Caco-2 (cell line): ENCODE measurements at regions of chr7 and their contacts with region 1.

Region 1: DNA sequence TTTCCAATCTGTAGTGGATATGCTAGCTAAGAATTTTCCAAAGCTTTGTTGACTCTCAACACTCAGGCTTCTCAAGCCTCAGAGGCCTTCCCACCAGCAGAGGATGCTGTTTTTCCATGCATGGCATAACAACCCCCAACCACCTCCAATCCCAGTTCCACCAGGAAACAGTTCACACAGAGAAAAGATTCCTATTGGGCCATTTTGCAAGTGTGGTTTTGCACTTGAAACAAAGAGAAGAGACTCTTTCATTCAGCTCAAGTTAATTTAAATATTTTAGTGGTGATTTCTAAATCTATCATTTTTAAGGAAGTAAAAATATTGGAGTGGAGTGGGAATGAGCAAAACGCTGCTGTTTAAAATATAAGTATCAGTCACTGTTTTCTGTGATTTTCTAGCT is 105.6 kb upstream of the COL1A2 start:
- DNase-seq: peak; percentile 78 to 80
- H3K4me3 ChIP-seq: no peak overlapping the region
- H3K4me3 Mint-ChIP-seq: no peak overlapping the region
- H3K27ac Mint-ChIP-seq: no peak overlapping the region
- H3K4me1 ChIP-seq: no peaks in the 10 kb centered on the region
- H3K4me1 Mint-ChIP-seq: no peaks in the 10 kb centered on the region
- H3K27me3 ChIP-seq: no peaks in the 10 kb centered on the region
- H3K27me3 Mint-ChIP-seq: peaks cover 16% of the 10 kb centered on the region
- CTCF ChIP-seq: peak; percentile 89 to 98

Region 2: DNA sequence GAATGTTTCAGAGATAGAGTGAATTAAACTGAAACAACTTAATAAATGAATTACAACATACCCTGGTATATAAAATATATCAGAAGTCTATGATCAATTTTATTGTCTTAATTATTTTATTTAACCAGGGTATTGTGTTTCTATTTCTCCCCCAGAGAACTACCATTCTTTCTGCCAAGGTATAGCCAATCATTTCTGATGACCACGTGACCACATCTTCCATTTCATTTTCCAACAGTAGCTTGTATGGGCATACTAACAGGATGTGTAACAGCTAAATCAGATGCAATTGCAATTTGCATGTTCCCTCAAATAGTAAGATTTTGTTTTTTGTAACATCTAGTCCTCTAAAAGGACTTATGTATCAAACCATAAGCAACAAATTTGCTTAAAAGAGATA is 18.3 kb before region 1 on chr7:
- CTCF ChIA-PET with region 1: no interaction called
- POLR2A ChIA-PET with region 1: no interaction called
- intact Hi-C with region 1: no loop called
- DNase-seq: no peak
- H3K4me3 ChIP-seq: no peak overlapping the region
- H3K4me3 Mint-ChIP-seq: no peak overlapping the region
- H3K27ac Mint-ChIP-seq: no peak overlapping the region
- H3K4me1 ChIP-seq: no peaks in the 10 kb centered on the region
- H3K4me1 Mint-ChIP-seq: no peaks in the 10 kb centered on the region
- H3K27me3 ChIP-seq: peaks cover 2% of the 10 kb centered on the region; the same call in 1 of the 2 replicates
- H3K27me3 Mint-ChIP-seq: peaks cover 13% of the 10 kb centered on the region
- CTCF ChIP-seq: no peak

Region 3: GRCh38 chr7:94301024-94301586 is 12.0 kb after region 1 on chr7:
- CTCF ChIA-PET with region 1: interaction called, 14 read pairs
- POLR2A ChIA-PET with region 1: no interaction called
- intact Hi-C with region 1: no loop called
- DNase-seq: peak; percentile 79 to 88
- H3K4me3 ChIP-seq: no peak overlapping the region
- H3K4me3 Mint-ChIP-seq: peak overlapping the region; percentile 32
- H3K27ac Mint-ChIP-seq: peak overlapping the region; percentile 90
- H3K4me1 ChIP-seq: peaks cover 43% of the 10 kb centered on the region
- H3K4me1 Mint-ChIP-seq: peaks cover 31% of the 10 kb centered on the region
- H3K27me3 ChIP-seq: no peaks in the 10 kb centered on the region
- H3K27me3 Mint-ChIP-seq: no peaks in the 10 kb centered on the region
- CTCF ChIP-seq: peak in 1 of 2 experiments; percentile 19

Region 4: GRCh38 chr7:94395141-94396036 is 106.3 kb after region 1 on chr7:
- CTCF ChIA-PET with region 1: interaction called, 56 read pairs
- POLR2A ChIA-PET with region 1: no interaction called
- intact Hi-C with region 1: loop called (anchors 1 kb)
- DNase-seq: peak; percentile 59 to 64
- H3K4me3 ChIP-seq: no peak overlapping the region
- H3K4me3 Mint-ChIP-seq: peak overlapping the region; percentile 59
- H3K27ac Mint-ChIP-seq: no peak overlapping the region
- H3K4me1 ChIP-seq: peaks cover 11% of the 10 kb centered on the region
- H3K4me1 Mint-ChIP-seq: peaks cover 6% of the 10 kb centered on the region
- H3K27me3 ChIP-seq: no peaks in the 10 kb centered on the region
- H3K27me3 Mint-ChIP-seq: no peaks in the 10 kb centered on the region
- CTCF ChIP-seq: peak; percentile 74 to 79

Region 5: GRCh38 chr7:94436018-94436604 is 147.0 kb after region 1 on chr7:
- CTCF ChIA-PET with region 1: interaction called, 6 read pairs
- POLR2A ChIA-PET with region 1: no interaction called
- intact Hi-C with region 1: loop called (anchors 1 kb)
- DNase-seq: peak; percentile 58 to 77
- H3K4me3 ChIP-seq: no peak overlapping the region
- H3K4me3 Mint-ChIP-seq: no peak overlapping the region
- H3K27ac Mint-ChIP-seq: no peak overlapping the region
- H3K4me1 ChIP-seq: peaks cover 25% of the 10 kb centered on the region
- H3K4me1 Mint-ChIP-seq: peaks cover 7% of the 10 kb centered on the region
- H3K27me3 ChIP-seq: no peaks in the 10 kb centered on the region; the same call in 1 of the 2 replicates
- H3K27me3 Mint-ChIP-seq: no peaks in the 10 kb centered on the region
- CTCF ChIP-seq: peak; percentile 72 to 82

Region 6: DNA sequence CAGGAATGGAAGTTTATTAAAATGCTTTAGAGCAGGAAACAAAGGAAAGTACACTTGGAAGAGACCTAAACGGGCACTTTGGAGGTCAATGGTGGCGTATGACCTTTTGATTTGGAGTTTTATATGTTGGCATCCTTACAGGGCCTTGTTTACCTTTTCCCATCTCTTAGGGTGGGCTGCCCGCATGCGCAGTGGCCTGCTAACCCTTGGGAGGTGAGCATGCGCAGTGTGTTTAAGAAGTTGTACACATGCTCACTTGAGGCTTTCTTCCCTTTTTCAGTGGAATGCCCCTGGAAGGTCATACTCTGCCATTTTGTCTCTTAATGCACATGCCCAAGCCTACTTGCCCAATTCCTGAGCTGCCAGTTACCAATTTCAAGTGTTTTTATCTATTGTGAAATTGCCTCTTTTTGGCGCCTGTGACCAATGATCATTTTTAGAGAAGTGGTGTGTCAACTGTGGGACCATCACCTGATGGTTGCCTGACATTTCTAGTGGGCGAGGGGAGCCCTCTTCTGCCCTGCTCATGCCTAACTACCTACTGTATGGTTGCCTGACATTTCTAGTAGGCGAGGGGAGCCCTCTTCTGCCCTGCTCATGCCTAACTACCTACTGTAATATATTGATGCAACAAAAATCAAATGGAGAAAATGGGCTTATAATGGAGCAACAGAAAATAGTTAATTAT is 756.3 kb after region 1 on chr7:
- CTCF ChIA-PET with region 1: interaction called, 3 read pairs
- POLR2A ChIA-PET with region 1: no interaction called
- intact Hi-C with region 1: loop called (anchors 5 kb)
- DNase-seq: peak; percentile 63
- H3K4me3 ChIP-seq: no peak overlapping the region
- H3K4me3 Mint-ChIP-seq: no peak overlapping the region
- H3K27ac Mint-ChIP-seq: no peak overlapping the region
- H3K4me1 ChIP-seq: peaks cover 5% of the 10 kb centered on the region; the same call in 1 of the 2 replicates
- H3K4me1 Mint-ChIP-seq: no peaks in the 10 kb centered on the region
- H3K27me3 ChIP-seq: no peaks in the 10 kb centered on the region
- H3K27me3 Mint-ChIP-seq: no peaks in the 10 kb centered on the region
- CTCF ChIP-seq: peak; percentile 17 to 59

Region 7: DNA sequence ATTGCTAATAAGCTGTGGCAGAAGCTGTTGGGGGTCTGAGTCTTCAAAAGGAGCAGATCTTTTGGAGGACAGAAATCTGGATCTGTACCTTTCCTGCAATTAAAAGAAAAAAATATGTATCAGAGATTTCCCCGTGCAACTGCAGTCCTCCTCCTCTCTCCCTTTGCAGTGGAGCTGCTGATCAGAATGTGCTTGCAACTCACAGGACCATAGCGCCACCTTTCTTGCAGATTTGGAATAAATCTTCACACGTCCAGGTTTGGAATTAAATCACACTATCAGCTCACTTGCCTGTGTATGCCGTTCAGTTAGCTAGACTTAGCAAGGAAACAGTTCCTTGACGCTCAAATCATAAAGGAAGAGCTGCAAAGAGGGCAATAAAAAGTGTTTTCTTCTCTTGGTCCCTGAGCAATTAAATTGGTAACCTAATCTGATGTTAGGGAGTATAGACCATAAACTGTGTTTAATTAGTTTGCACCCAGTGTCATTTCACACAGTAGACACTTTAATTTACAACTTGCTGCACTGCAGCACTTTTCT is 957.8 kb after region 1 on chr7:
- CTCF ChIA-PET with region 1: no interaction called
- POLR2A ChIA-PET with region 1: no interaction called
- intact Hi-C with region 1: loop called (anchors 5 kb)
- DNase-seq: peak; percentile 62 to 69
- H3K4me3 ChIP-seq: no peak overlapping the region
- H3K4me3 Mint-ChIP-seq: no peak overlapping the region
- H3K27ac Mint-ChIP-seq: no peak overlapping the region
- H3K4me1 ChIP-seq: no peaks in the 10 kb centered on the region
- H3K4me1 Mint-ChIP-seq: no peaks in the 10 kb centered on the region
- H3K27me3 ChIP-seq: no peaks in the 10 kb centered on the region
- H3K27me3 Mint-ChIP-seq: no peaks in the 10 kb centered on the region
- CTCF ChIP-seq: peak; percentile 71 to 77